ENCODE measurements at regions of chr7 and their contacts with region 1.

Region 1: DNA sequence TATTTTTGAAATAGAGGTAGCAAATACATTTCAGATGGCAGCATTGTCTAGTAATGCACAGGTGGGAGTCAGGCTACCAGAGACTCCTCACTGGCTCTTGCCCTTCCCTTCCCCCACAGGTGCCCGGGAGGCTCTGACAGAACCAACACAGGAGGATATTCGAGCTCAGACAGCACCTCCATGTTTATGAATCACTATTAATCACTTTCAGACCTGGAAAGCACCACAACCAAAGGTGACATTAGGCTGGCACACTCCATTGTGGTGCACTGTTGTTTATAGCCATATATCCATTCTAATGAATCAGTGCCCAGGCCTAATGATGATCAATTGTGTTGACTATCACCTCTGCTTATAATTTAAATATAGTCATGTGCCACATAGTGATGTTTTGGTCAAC is 107.8 kb upstream of the NAMPT start:
- DNase-seq: no peak
- H3K4me3 Mint-ChIP-seq: no peak overlapping the region
- H3K27ac Mint-ChIP-seq: no peak overlapping the region
- H3K4me1 Mint-ChIP-seq: peaks cover 5% of the 10 kb centered on the region
- H3K27me3 Mint-ChIP-seq: peaks cover 34% of the 10 kb centered on the region

Region 2: GRCh38 chr7:106031300-106032035 is 361.1 kb before region 1 on chr7:
- CTCF ChIA-PET with region 1: no interaction called
- intact Hi-C with region 1: no loop called
- DNase-seq: peak; percentile 38
- H3K4me3 Mint-ChIP-seq: no peak overlapping the region
- H3K27ac Mint-ChIP-seq: no peak overlapping the region
- H3K4me1 Mint-ChIP-seq: peaks cover 28% of the 10 kb centered on the region
- H3K27me3 Mint-ChIP-seq: no peaks in the 10 kb centered on the region

Region 3: DNA sequence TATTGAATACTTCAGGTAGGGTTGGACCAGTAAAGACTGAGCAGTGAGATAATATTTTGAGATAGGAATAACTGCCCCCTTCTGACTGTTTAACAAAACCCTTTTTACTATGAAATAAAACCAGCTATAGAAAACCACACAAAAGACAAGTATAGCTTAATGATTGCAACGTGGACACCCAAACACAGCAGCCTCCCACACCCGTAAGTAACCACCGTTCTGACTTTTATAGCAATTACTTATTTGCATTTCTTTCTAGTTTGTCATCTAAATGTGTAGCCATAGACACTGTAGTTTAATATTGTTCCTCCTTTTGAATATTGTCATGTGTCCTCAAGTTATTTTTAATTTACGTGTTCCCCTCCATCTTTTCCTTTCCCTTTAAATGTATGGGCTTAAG is 237.6 kb before region 1 on chr7:
- CTCF ChIA-PET with region 1: no interaction called
- intact Hi-C with region 1: no loop called
- DNase-seq: no peak
- H3K4me3 Mint-ChIP-seq: no peak overlapping the region
- H3K27ac Mint-ChIP-seq: no peak overlapping the region
- H3K4me1 Mint-ChIP-seq: peaks cover 9% of the 10 kb centered on the region
- H3K27me3 Mint-ChIP-seq: peaks cover 14% of the 10 kb centered on the region

Region 4: GRCh38 chr7:106367018-106367420 is 25.6 kb before region 1 on chr7:
- CTCF ChIA-PET with region 1: no interaction called
- intact Hi-C with region 1: no loop called
- DNase-seq: no peak
- H3K4me3 Mint-ChIP-seq: no peak overlapping the region
- H3K27ac Mint-ChIP-seq: peak overlapping the region; percentile 70
- H3K4me1 Mint-ChIP-seq: peaks cover 44% of the 10 kb centered on the region
- H3K27me3 Mint-ChIP-seq: peaks cover 23% of the 10 kb centered on the region

Region 5: GRCh38 chr7:106377847-106378361 is 14.7 kb before region 1 on chr7:
- CTCF ChIA-PET with region 1: no interaction called
- intact Hi-C with region 1: loop called (anchors 2 kb)
- DNase-seq: no peak
- H3K4me3 Mint-ChIP-seq: no peak overlapping the region
- H3K27ac Mint-ChIP-seq: no peak overlapping the region
- H3K4me1 Mint-ChIP-seq: peaks cover 8% of the 10 kb centered on the region
- H3K27me3 Mint-ChIP-seq: peaks cover 9% of the 10 kb centered on the region

Measured in activated naive CD4-positive, alpha-beta T cell treated with anti-CD3 and anti-CD28 coated beads for 36 hours (primary cell).